ENCODE measurements at regions of chr2 and their contacts with region 1.

Region 1: GRCh38 chr2:46062637-46063412 is 234.4 kb upstream of the EPAS1 start:
- DNase-seq: peak; percentile 84
- H3K4me3 Mint-ChIP-seq: no peak overlapping the region
- H3K27ac Mint-ChIP-seq: no peak overlapping the region
- H3K4me1 Mint-ChIP-seq: peaks cover 18% of the 10 kb centered on the region
- H3K27me3 Mint-ChIP-seq: no peaks in the 10 kb centered on the region
- CTCF ChIP-seq: peak; percentile 75

Region 2: GRCh38 chr2:45643543-45644542 is 419.0 kb before region 1 on chr2:
- CTCF ChIA-PET with region 1: no interaction called
- POLR2A ChIA-PET with region 1: no interaction called
- intact Hi-C with region 1: loop called (anchors 5 kb)
- DNase-seq: peak; percentile 62
- H3K4me3 Mint-ChIP-seq: peak overlapping the region; percentile 73
- H3K27ac Mint-ChIP-seq: peak overlapping the region; percentile 37
- H3K4me1 Mint-ChIP-seq: peaks cover 17% of the 10 kb centered on the region
- H3K27me3 Mint-ChIP-seq: no peaks in the 10 kb centered on the region
- CTCF ChIP-seq: peak; percentile 96

Region 3: DNA sequence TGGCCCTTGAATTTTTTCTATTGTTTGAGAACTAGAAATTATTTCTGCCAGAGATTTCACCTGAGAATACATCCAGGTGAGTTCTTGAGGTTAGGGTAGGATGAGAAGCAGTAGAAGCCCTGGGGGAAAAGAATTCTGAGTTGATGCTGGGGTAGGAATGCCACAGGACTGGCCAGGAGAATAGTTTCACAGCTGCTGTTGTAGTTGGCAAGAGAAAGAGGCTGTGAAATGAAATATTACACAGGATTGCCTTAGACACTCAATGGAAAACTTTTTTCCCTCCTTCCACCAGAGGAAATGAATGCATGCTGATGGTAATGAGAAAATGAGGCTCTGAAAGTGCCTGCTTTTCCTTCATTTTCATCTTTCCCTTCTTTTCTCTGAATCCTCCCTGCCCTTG is 356.8 kb before region 1 on chr2:
- CTCF ChIA-PET with region 1: no interaction called
- POLR2A ChIA-PET with region 1: no interaction called
- intact Hi-C with region 1: no loop called
- DNase-seq: no peak
- H3K4me3 Mint-ChIP-seq: no peak overlapping the region
- H3K27ac Mint-ChIP-seq: no peak overlapping the region
- H3K4me1 Mint-ChIP-seq: no peaks in the 10 kb centered on the region
- H3K27me3 Mint-ChIP-seq: no peaks in the 10 kb centered on the region
- CTCF ChIP-seq: no peak

Region 4: GRCh38 chr2:46050489-46050888 is 12.3 kb before region 1 on chr2:
- CTCF ChIA-PET with region 1: interaction called, 50 read pairs
- POLR2A ChIA-PET with region 1: interaction called, 3 read pairs
- intact Hi-C with region 1: no loop called
- DNase-seq: no peak
- H3K4me3 Mint-ChIP-seq: no peak overlapping the region
- H3K27ac Mint-ChIP-seq: no peak overlapping the region
- H3K4me1 Mint-ChIP-seq: no peaks in the 10 kb centered on the region
- H3K27me3 Mint-ChIP-seq: no peaks in the 10 kb centered on the region
- CTCF ChIP-seq: no peak

Region 5: GRCh38 chr2:46097714-46098480 is 35.1 kb after region 1 on chr2:
- CTCF ChIA-PET with region 1: interaction called, 11 read pairs
- POLR2A ChIA-PET with region 1: interaction called, 6 read pairs
- intact Hi-C with region 1: no loop called
- DNase-seq: peak; percentile 92
- H3K4me3 Mint-ChIP-seq: peak overlapping the region; percentile 19
- H3K27ac Mint-ChIP-seq: peak overlapping the region; percentile 92
- H3K4me1 Mint-ChIP-seq: peaks cover 20% of the 10 kb centered on the region
- H3K27me3 Mint-ChIP-seq: no peaks in the 10 kb centered on the region
- CTCF ChIP-seq: no peak

Region 6: GRCh38 chr2:46171411-46171953 is 108.7 kb after region 1 on chr2:
- CTCF ChIA-PET with region 1: interaction called, 21 read pairs
- POLR2A ChIA-PET with region 1: interaction called, 3 read pairs
- intact Hi-C with region 1: loop called (anchors 5 kb)
- DNase-seq: peak; percentile 89
- H3K4me3 Mint-ChIP-seq: peak overlapping the region; percentile 35
- H3K27ac Mint-ChIP-seq: peak overlapping the region; percentile 70
- H3K4me1 Mint-ChIP-seq: peaks cover 36% of the 10 kb centered on the region
- H3K27me3 Mint-ChIP-seq: no peaks in the 10 kb centered on the region
- CTCF ChIP-seq: no peak

Region 7: GRCh38 chr2:46364797-46365457 is 302.1 kb after region 1 on chr2:
- CTCF ChIA-PET with region 1: interaction called, 16 read pairs
- POLR2A ChIA-PET with region 1: interaction called, 3 read pairs
- intact Hi-C with region 1: loop called (anchors 1 kb)
- DNase-seq: peak; percentile 67
- H3K4me3 Mint-ChIP-seq: no peak overlapping the region
- H3K27ac Mint-ChIP-seq: no peak overlapping the region
- H3K4me1 Mint-ChIP-seq: peaks cover 9% of the 10 kb centered on the region
- H3K27me3 Mint-ChIP-seq: no peaks in the 10 kb centered on the region
- CTCF ChIP-seq: peak; percentile 73

Measured in MCF 10A (cell line).